ENCODE measurements at regions of chr20 and their contacts with region 1.

Region 1: GRCh38 chr20:23340524-23340923 is 10.1 kb upstream of the NXT1 start:
- DNase-seq: peak; percentile 83 to 87
- ATAC-seq: peak; percentile 85 to 95
- H3K4me3 ChIP-seq: no peak overlapping the region
- H3K27ac ChIP-seq: peak overlapping the region; percentile 6 to 60; a peak in 5 of 6 replicates
- H3K4me1 ChIP-seq: no peaks in the 10 kb centered on the region
- CTCF ChIP-seq: peak; percentile 90
- EP300 ChIP-seq: no peak
- POLR2A ChIP-seq: no peak
- RAD21 ChIP-seq: peak; percentile 92 to 96

Region 2: GRCh38 chr20:22333885-22334545 is 1006.5 kb before region 1 on chr20:
- CTCF ChIA-PET with region 1: interaction called, 27 read pairs
- POLR2A ChIA-PET with region 1: interaction called, 3 read pairs
- DNase-seq: peak; percentile 81 to 96
- ATAC-seq: peak; percentile 83 to 93
- H3K4me3 ChIP-seq: no peak overlapping the region
- H3K27ac ChIP-seq: no peak overlapping the region
- H3K4me1 ChIP-seq: no peaks in the 10 kb centered on the region
- CTCF ChIP-seq: peak; percentile 94
- EP300 ChIP-seq: no peak
- POLR2A ChIP-seq: no peak
- RAD21 ChIP-seq: peak; percentile 95 to 96

Region 3: DNA sequence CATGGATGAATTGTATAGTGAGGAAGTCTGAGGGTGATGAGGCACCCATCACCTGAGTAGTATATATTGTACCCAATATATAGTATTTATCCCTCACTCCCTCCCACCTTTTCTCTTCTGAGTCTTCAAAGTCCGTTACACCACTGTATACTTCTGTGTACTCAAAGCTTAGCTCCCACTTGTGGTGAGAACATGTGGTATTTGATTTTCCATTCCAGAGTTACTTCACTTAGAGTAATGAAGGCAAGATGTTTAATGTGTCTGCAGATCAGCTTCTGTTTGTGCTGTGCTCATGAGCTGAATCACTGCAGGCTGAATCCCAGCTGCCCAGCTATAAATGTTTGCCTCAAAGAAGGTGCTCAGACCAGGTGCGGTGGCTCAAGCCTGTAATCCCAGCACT is 616.9 kb before region 1 on chr20:
- CTCF ChIA-PET with region 1: interaction called, 14 read pairs
- POLR2A ChIA-PET with region 1: no interaction called
- DNase-seq: peak in 1 of 2 experiments; percentile 29
- ATAC-seq: peak in 1 of 2 experiments; percentile 57; a peak in 4 of 6 replicates
- H3K4me3 ChIP-seq: no peak overlapping the region
- H3K27ac ChIP-seq: peak overlapping the region; percentile 47 to 68; a peak in 5 of 6 replicates
- H3K4me1 ChIP-seq: peaks cover 35% of the 10 kb centered on the region
- CTCF ChIP-seq: no peak
- EP300 ChIP-seq: no peak
- POLR2A ChIP-seq: no peak
- RAD21 ChIP-seq: 0 out of 5 replicates have a peak, but pooled peaks of 1 of the 2 experiments have one; percentile 9

Region 4: GRCh38 chr20:22846863-22847262 is 493.7 kb before region 1 on chr20:
- CTCF ChIA-PET with region 1: interaction called, 11 read pairs
- POLR2A ChIA-PET with region 1: no interaction called
- DNase-seq: no peak
- ATAC-seq: no peak
- H3K4me3 ChIP-seq: no peak overlapping the region
- H3K27ac ChIP-seq: 0 out of 6 replicates have a peak overlapping the region, but pooled peaks of 1 of the 2 experiments have one; percentile 13
- H3K4me1 ChIP-seq: peaks cover 7% of the 10 kb centered on the region; the same call in 2 of the 3 replicates
- CTCF ChIP-seq: no peak
- EP300 ChIP-seq: no peak
- POLR2A ChIP-seq: no peak
- RAD21 ChIP-seq: no peak

Region 5: GRCh38 chr20:23245553-23246181 is 94.9 kb before region 1 on chr20:
- CTCF ChIA-PET with region 1: interaction called, 30 read pairs
- POLR2A ChIA-PET with region 1: no interaction called
- DNase-seq: peak; percentile 65 to 75
- ATAC-seq: peak; percentile 93 to 98
- H3K4me3 ChIP-seq: no peak overlapping the region
- H3K27ac ChIP-seq: peak overlapping the region in 1 of 2 experiments; percentile 34; a peak in 1 of 6 replicates
- H3K4me1 ChIP-seq: no peaks in the 10 kb centered on the region
- CTCF ChIP-seq: peak; percentile 71
- EP300 ChIP-seq: no peak
- POLR2A ChIP-seq: no peak
- RAD21 ChIP-seq: peak; percentile 63 to 64

Region 6: GRCh38 chr20:23320317-23320716 is 20.2 kb before region 1 on chr20:
- CTCF ChIA-PET with region 1: interaction called, 76 read pairs
- POLR2A ChIA-PET with region 1: no interaction called
- DNase-seq: peak; percentile 55 to 64
- ATAC-seq: peak; percentile 81 to 93; a peak in 5 of 6 replicates
- H3K4me3 ChIP-seq: no peak overlapping the region
- H3K27ac ChIP-seq: no peak overlapping the region
- H3K4me1 ChIP-seq: no peaks in the 10 kb centered on the region; the same call in 2 of the 3 replicates
- CTCF ChIP-seq: peak; percentile 28; the same call in 2 of the 3 replicates
- EP300 ChIP-seq: no peak
- POLR2A ChIP-seq: no peak
- RAD21 ChIP-seq: peak; percentile 30 to 41; a peak in 3 of 5 replicates

Region 7: GRCh38 chr20:23399568-23400241 is 59.2 kb after region 1 on chr20:
- CTCF ChIA-PET with region 1: no interaction called
- POLR2A ChIA-PET with region 1: no interaction called
- DNase-seq: peak; percentile 24 to 28
- ATAC-seq: peak; percentile 66 to 80; a peak in 5 of 6 replicates
- H3K4me3 ChIP-seq: no peak overlapping the region
- H3K27ac ChIP-seq: no peak overlapping the region
- H3K4me1 ChIP-seq: no peaks in the 10 kb centered on the region
- CTCF ChIP-seq: no peak
- EP300 ChIP-seq: no peak
- POLR2A ChIP-seq: no peak
- RAD21 ChIP-seq: no peak

Region 8: DNA sequence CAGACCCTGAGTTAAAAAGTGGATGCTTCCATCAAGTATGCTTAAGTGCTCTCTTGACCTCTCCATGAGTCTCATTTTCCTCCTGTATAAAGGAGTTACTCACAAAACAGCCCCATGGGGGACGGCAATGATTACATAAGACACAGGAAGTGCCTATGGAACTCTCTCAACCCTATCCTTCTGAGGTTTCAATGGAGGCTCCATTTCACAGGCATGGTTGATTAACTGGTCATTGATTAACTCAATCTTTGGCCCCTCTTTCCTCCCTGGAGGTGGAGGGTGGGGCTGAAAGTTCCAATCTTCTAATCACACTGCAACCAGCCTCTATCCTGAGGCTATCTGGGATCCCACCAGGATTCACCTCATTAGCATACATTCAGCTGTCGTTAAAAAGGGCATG is 179.7 kb after region 1 on chr20:
- CTCF ChIA-PET with region 1: no interaction called
- POLR2A ChIA-PET with region 1: no interaction called
- DNase-seq: no peak
- ATAC-seq: no peak
- H3K4me3 ChIP-seq: no peak overlapping the region
- H3K27ac ChIP-seq: no peak overlapping the region
- H3K4me1 ChIP-seq: peaks cover 5% of the 10 kb centered on the region; the same call in 1 of the 3 replicates
- CTCF ChIP-seq: no peak
- EP300 ChIP-seq: no peak
- POLR2A ChIP-seq: no peak
- RAD21 ChIP-seq: no peak

Measured in A549 (cell line).